ENCODE measurements at regions of chr5 and their contacts with region 1.

Region 1: GRCh38 chr5:87412630-87413342 is at the start of gene CCNH:
- DNase-seq: peak; percentile 98
- H3K4me3 ChIP-seq: peak within 1 kb of the TSS; percentile 71 to 96 (median 94)
- H3K27ac ChIP-seq: peak within 1 kb of the TSS; percentile 97
- H3K4me1 ChIP-seq: peaks cover 18% of the 10 kb centered on the region
- H3K27me3 ChIP-seq: no peaks in the 10 kb centered on the region
- CTCF ChIP-seq: no peak
- POLR2A ChIP-seq: peak; percentile 89
- total RNA-seq, gene CCNH: 50.6 and 54.1 TPM in 2 replicates

Region 2: GRCh38 chr5:86617756-86618576 is 794.8 kb before region 1 on chr5 and contains the start of gene COX7C:
- CTCF ChIA-PET with region 1: no interaction called
- POLR2A ChIA-PET with region 1: no interaction called
- dilution Hi-C with region 1: no loop called
- intact Hi-C with region 1: loop called (anchors 5 kb)
- DNase-seq: peak; percentile 97
- H3K4me3 ChIP-seq: peak within 1 kb of the TSS; percentile 97 to 98 (median 97)
- H3K27ac ChIP-seq: peak within 1 kb of the TSS; percentile 78
- H3K4me1 ChIP-seq: peaks cover 6% of the 10 kb centered on the region
- H3K27me3 ChIP-seq: peaks cover 2 to 3% of the 10 kb centered on the region in 2 experiments
- CTCF ChIP-seq: no peak
- POLR2A ChIP-seq: peak; percentile 71
- total RNA-seq, gene COX7C: 383 and 406 TPM in 2 replicates

Region 3: GRCh38 chr5:86880785-86881492 is 531.8 kb before region 1 on chr5:
- CTCF ChIA-PET with region 1: no interaction called
- POLR2A ChIA-PET with region 1: no interaction called
- dilution Hi-C with region 1: no loop called
- intact Hi-C with region 1: loop called (anchors 5 kb)
- DNase-seq: peak; percentile 69
- H3K4me3 ChIP-seq: no peak overlapping the region
- H3K27ac ChIP-seq: no peak overlapping the region
- H3K4me1 ChIP-seq: no peaks in the 10 kb centered on the region
- H3K27me3 ChIP-seq: no peaks in the 10 kb centered on the region
- CTCF ChIP-seq: peak; percentile 61 to 66
- POLR2A ChIP-seq: no peak

Region 4: GRCh38 chr5:87121304-87122150 is 291.3 kb before region 1 on chr5:
- CTCF ChIA-PET with region 1: no interaction called
- POLR2A ChIA-PET with region 1: no interaction called
- dilution Hi-C with region 1: no loop called
- intact Hi-C with region 1: loop called (anchors 5 kb)
- DNase-seq: peak; percentile 89
- H3K4me3 ChIP-seq: peak overlapping the region in 1 of 3 experiments; percentile 2
- H3K27ac ChIP-seq: peak overlapping the region; percentile 98
- H3K4me1 ChIP-seq: peaks cover 30% of the 10 kb centered on the region
- H3K27me3 ChIP-seq: no peaks in the 10 kb centered on the region
- CTCF ChIP-seq: no peak
- POLR2A ChIP-seq: no peak

Region 5: GRCh38 chr5:88680253-88681132 is 1267.7 kb after region 1 on chr5:
- CTCF ChIA-PET with region 1: no interaction called
- POLR2A ChIA-PET with region 1: no interaction called
- dilution Hi-C with region 1: no loop called
- intact Hi-C with region 1: loop called (anchors 5 kb)
- DNase-seq: peak; percentile 37
- H3K4me3 ChIP-seq: peak overlapping the region in 1 of 3 experiments; percentile 34
- H3K27ac ChIP-seq: no peak overlapping the region
- H3K4me1 ChIP-seq: peaks cover 8% of the 10 kb centered on the region
- H3K27me3 ChIP-seq: peaks cover 83 to 99% of the 10 kb centered on the region in 2 experiments
- CTCF ChIP-seq: peak; percentile 90 to 97
- POLR2A ChIP-seq: no peak

Measured in endothelial cell of umbilical vein (primary cell).